H1 (cell line): ENCODE measurements at regions of chr3 and their contacts with region 1.

Region 1: DNA sequence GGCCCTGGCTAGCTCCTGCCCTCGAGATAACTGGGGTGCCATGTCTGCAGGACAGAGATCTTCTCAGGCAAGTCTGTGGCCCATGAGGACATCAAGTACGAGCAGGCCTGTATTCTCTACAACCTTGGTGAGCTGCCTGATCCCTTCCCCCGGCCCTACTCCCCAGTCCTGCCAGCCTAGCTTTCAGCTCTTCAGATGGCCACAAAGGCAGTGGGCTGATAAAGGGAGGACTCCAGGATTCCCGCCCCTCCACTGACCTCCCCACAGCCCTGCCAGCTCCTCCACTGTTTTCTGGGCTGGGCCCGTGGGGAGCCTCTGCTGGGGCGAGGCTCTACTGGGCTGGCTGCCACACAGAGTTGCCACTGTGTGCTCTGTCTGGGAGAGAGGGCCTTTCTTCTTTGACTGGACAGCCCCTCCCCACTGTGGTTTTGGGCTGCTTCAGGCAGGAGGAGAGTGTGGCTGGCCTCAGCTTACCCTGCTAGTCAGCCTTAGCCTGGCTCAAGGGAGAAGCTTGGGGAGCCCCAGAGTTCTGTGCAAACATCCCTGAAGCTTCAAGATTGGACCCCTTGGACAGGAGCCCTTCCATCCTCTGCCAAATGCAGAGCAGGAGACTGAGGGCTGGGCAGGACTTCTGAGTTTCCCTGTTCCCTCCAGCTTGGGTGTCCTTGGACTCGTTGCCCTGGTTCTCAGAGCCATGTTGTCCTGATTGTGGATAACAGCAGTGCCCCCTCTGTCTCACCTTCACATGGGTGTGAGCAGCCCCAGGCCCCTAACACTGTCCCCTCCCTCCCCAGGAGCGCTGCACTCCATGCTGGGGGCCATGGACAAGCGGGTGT is 24.4 kb downstream of the PTPN23 start:
- DNase-seq: no peak
- H3K4me3 ChIP-seq: no peak overlapping the region
- H3K27ac ChIP-seq: no peak overlapping the region
- H3K4me1 ChIP-seq: no peaks in the 10 kb centered on the region
- H3K27me3 ChIP-seq: no peaks in the 10 kb centered on the region
- CTCF ChIP-seq: no peak
- EP300 ChIP-seq: no peak
- POLR2A ChIP-seq: no peak
- RAD21 ChIP-seq: no peak

Region 2: GRCh38 chr3:47250309-47251060 is 154.7 kb before region 1 on chr3:
- CTCF ChIA-PET with region 1: no interaction called
- POLR2A ChIA-PET with region 1: no interaction called
- DNase-seq: no peak
- H3K4me3 ChIP-seq: no peak overlapping the region
- H3K27ac ChIP-seq: no peak overlapping the region
- H3K4me1 ChIP-seq: no peaks in the 10 kb centered on the region; a peak in 1 of 7 replicates
- H3K27me3 ChIP-seq: no peaks in the 10 kb centered on the region
- CTCF ChIP-seq: peak; percentile 7 to 53 (median 49)
- EP300 ChIP-seq: no peak
- POLR2A ChIP-seq: no peak
- RAD21 ChIP-seq: peak; percentile 56 to 70

Region 3: DNA sequence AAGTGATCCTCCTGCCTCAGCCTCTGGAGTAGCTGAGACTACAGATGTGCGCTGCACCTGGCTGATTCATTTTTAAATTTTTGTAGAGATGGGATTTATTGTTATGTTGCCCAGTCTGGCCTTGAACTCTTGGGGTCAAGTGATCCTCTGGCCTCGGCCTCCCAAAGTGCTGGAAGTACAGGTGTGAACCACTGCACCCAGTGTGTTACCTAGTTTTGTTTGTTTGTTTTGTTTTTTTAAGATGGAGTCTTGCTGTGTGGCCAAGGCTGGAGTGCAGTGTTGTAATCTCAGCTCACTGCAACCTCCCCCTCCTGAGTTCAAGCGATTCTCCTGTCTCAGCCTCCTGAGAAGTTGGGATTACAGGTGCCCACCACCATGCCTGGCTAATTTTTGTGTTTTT is 12.2 kb before region 1 on chr3:
- CTCF ChIA-PET with region 1: interaction called, 12 read pairs
- POLR2A ChIA-PET with region 1: interaction called, 3 read pairs
- DNase-seq: no peak
- H3K4me3 ChIP-seq: no peak overlapping the region
- H3K27ac ChIP-seq: no peak overlapping the region
- H3K4me1 ChIP-seq: no peaks in the 10 kb centered on the region
- H3K27me3 ChIP-seq: no peaks in the 10 kb centered on the region
- CTCF ChIP-seq: no peak
- EP300 ChIP-seq: no peak
- POLR2A ChIP-seq: no peak
- RAD21 ChIP-seq: no peak

Region 4: GRCh38 chr3:47542471-47543173 is 137.4 kb after region 1 on chr3:
- CTCF ChIA-PET with region 1: no interaction called
- POLR2A ChIA-PET with region 1: no interaction called
- DNase-seq: no peak
- H3K4me3 ChIP-seq: no peak overlapping the region
- H3K27ac ChIP-seq: no peak overlapping the region
- H3K4me1 ChIP-seq: no peaks in the 10 kb centered on the region
- H3K27me3 ChIP-seq: no peaks in the 10 kb centered on the region; a peak in 1 of 7 replicates
- CTCF ChIP-seq: no peak
- EP300 ChIP-seq: no peak
- POLR2A ChIP-seq: no peak
- RAD21 ChIP-seq: no peak

Region 5: DNA sequence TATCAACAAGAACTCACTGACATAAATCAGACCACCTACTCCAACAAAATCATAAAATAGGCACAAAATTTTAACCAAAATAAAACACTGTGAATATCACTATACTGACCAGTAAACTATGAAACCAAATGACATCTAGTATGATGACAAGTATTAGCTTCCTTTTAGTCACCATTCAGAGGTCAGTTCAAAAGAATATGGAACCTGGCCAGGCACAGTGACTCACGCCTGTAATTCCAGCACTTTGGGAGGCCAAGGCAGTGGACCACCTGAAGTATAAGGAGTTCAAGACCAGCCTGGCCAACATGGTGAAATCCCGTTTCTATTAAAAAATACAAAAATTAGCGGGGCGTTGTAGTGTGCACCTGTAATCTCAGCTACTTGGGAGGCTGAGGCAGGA is 310.8 kb after region 1 on chr3:
- CTCF ChIA-PET with region 1: no interaction called
- POLR2A ChIA-PET with region 1: no interaction called
- DNase-seq: no peak
- H3K4me3 ChIP-seq: no peak overlapping the region
- H3K27ac ChIP-seq: no peak overlapping the region
- H3K4me1 ChIP-seq: no peaks in the 10 kb centered on the region
- H3K27me3 ChIP-seq: no peaks in the 10 kb centered on the region
- CTCF ChIP-seq: no peak
- EP300 ChIP-seq: no peak
- POLR2A ChIP-seq: no peak
- RAD21 ChIP-seq: no peak